ENCODE measurements at regions of chrX and their contacts with region 1.

Region 1: GRCh38 chrX:102950908-102951866 is 14.1 kb downstream of the RAB40AL start:
- DNase-seq: peak in 7 of 10 donors; percentile 18 to 79 (median 61)

Region 2: GRCh38 chrX:102892103-102892502 is 59.1 kb before region 1 on chrX:
- intact Hi-C with region 1: no loop called
- DNase-seq: no peak

Region 3: DNA sequence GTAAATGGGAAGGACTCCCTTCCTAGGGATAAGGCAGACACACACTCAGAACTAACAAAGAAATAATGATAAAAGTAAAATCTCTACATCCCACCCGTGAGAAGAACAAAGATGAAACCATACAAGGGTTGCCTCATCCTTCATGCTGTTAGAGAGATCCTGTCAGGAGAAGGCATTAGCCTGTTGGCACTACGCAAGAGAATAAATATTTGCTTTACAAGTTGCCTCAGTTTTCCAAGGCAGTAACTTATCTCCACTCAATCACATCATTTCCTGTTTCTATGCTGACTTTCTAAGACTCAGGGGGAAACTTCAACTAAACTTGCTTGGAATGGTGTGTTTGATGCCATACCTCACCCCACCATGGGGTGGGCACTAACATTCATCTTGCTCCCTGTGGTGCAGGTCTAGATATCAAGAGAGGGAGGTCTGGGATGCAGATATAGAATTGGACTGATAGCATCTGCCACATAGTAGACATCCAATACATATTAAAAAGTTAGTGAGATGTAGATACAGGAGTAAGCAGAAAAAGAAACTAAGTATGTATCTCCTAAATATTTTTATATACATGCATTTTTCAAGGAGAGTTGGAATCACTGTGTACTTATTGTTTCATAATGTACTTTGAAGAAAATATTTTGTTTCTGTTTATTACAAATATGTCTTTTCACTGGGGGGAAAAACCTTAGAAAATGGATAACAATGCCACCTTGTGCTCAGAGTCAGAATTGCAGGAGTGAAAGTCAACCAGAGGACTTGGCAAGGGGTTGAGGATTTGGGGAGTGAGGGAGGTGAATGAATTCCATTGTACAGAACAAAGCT is 206.5 kb after region 1 on chrX:
- intact Hi-C with region 1: loop called (anchors 5 kb)
- DNase-seq: peak in 2 of 10 donors; percentile 4 to 27

Region 4: GRCh38 chrX:103175944-103176753 is 225.0 kb after region 1 on chrX:
- intact Hi-C with region 1: loop called (anchors 1 kb)
- DNase-seq: peak in 9 of 10 donors; percentile 48 to 91 (median 64)

Region 5: DNA sequence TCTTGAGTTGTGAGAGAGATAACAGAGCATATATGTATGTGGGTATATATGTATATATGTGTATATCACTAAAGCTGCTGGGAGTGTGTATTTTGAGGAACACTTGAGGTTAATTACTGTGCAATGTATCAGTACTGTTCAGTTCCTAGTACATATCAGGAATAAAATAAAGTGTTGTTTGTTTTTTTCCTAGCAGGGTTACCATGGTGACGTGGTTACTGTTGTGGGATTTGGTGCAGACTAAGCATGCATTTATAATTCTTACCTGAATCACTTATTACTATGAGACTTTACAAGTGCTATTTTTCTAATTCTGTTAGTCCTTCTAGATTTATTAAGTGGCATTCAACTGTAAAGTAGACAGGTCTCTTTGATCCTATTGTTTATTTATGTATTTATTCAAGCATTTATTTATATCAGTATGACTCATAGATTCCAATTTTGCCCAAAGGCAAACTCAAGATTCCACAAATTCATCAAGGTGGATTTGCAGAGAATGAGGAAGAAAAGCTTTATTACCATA is 236.8 kb after region 1 on chrX:
- intact Hi-C with region 1: no loop called
- DNase-seq: no peak

Region 6: GRCh38 chrX:103201041-103201440 is 249.9 kb after region 1 on chrX:
- intact Hi-C with region 1: no loop called
- DNase-seq: no peak